Activated T-helper 1 cell treated with anti-CD3 and anti-CD28 coated beads, Interleukin-12 subunit alpha, Interleukin-12 subunit beta, Interleukin-2, Interleukin-4 antibody, amounts not matched to agents 30 ng/mL and 10 ng/mL and 1 ng/mL, durations not matched to agents 14 hours and 24 hours and 36 hours (primary cell): ENCODE measurements at regions of chr19 and their contacts with region 1.

Region 1: DNA sequence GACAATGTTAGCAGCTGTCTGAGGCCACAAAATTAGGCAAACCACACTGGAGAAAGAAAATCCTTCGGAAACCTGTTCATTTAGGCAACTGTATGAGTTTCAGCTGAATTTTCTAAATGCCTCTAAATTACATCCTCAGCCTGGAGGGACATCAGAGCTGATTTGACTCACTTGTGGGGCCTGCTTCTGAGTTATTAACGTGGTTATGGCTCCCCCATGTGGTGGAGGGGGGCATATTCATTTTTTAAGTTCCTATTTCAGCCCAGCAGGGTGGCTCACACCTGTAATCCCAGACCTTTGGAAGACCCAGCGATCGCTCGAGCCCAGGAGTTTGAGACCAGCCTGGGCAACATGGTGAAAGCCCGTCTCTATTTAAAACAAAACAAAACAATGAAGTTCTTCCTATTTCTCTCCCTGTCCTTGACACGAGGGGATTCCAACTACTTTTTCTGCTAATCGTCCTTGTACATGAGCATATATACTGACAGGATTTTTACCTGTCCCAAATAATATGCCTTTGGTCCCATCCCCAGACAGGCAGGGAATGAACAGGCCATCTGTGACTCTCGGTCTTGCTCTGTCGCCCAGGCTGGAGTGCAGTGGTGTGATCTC is 31.5 kb upstream of the HIF3A start:
- DNase-seq: peak; percentile 61
- H3K4me3 Mint-ChIP-seq: no peak overlapping the region
- H3K27ac Mint-ChIP-seq: no peak overlapping the region
- H3K4me1 Mint-ChIP-seq: peaks cover 10% of the 10 kb centered on the region
- H3K27me3 Mint-ChIP-seq: peaks cover 58% of the 10 kb centered on the region

Region 2: GRCh38 chr19:46030812-46031550 is 234.3 kb before region 1 on chr19:
- intact Hi-C with region 1: loop called (anchors 1 kb)
- DNase-seq: no peak
- H3K4me3 Mint-ChIP-seq: no peak overlapping the region
- H3K27ac Mint-ChIP-seq: no peak overlapping the region
- H3K4me1 Mint-ChIP-seq: peaks cover 14% of the 10 kb centered on the region
- H3K27me3 Mint-ChIP-seq: peaks cover 24% of the 10 kb centered on the region

Region 3: GRCh38 chr19:46115396-46116106 is 149.8 kb before region 1 on chr19:
- intact Hi-C with region 1: loop called (anchors 1 kb)
- DNase-seq: no peak
- H3K4me3 Mint-ChIP-seq: peak overlapping the region; percentile 12
- H3K27ac Mint-ChIP-seq: no peak overlapping the region
- H3K4me1 Mint-ChIP-seq: peaks cover 13% of the 10 kb centered on the region
- H3K27me3 Mint-ChIP-seq: peaks cover 22% of the 10 kb centered on the region

Region 4: DNA sequence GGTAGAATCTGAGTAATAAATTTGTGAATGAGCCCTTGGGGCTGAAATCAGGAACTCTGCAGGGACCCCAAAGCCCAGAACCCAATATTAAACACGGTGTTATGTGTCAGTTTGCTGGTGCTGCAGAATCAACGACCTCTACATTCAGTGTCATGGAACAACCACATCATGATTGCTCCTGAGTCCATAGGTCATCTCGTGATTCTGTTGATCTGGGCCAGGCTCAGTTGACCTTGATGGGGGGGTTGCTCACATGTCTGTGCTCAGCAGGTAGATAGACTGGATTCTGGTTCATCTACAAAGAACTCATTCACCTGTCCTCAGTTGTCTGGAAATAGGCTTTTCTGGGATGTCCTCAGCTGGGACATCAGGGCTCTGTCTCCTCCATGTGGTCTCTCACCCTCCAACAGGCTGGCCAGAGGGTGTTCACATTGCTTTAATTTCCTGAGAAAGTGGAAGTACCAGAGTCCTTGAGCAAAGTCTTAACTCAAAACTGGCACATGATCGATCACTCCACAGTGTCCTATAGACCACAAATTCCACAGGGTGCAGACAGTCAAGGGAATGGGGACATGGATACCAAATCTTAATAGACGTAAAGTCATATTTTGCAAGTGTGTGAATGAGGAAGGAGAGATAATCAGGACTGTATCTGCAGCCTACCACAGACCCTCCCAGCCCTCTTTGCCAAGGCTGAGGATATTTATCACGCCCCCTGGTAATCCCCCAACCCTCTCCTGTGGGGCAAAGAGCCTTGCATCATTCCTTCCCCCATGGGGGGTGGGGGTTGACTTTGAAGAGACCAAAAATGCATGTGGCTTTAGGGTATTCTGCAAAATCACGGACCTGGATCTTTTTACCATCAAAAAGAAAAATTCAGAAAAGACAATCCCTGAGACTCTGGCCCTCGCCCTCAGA is 75.1 kb before region 1 on chr19:
- intact Hi-C with region 1: loop called (anchors 1 kb)
- DNase-seq: no peak
- H3K4me3 Mint-ChIP-seq: no peak overlapping the region
- H3K27ac Mint-ChIP-seq: no peak overlapping the region
- H3K4me1 Mint-ChIP-seq: peaks cover 5% of the 10 kb centered on the region
- H3K27me3 Mint-ChIP-seq: peaks cover 27% of the 10 kb centered on the region

Region 5: GRCh38 chr19:46218160-46218559 is 47.2 kb before region 1 on chr19:
- intact Hi-C with region 1: no loop called
- DNase-seq: no peak
- H3K4me3 Mint-ChIP-seq: no peak overlapping the region
- H3K27ac Mint-ChIP-seq: no peak overlapping the region
- H3K4me1 Mint-ChIP-seq: no peaks in the 10 kb centered on the region
- H3K27me3 Mint-ChIP-seq: no peaks in the 10 kb centered on the region

Region 6: DNA sequence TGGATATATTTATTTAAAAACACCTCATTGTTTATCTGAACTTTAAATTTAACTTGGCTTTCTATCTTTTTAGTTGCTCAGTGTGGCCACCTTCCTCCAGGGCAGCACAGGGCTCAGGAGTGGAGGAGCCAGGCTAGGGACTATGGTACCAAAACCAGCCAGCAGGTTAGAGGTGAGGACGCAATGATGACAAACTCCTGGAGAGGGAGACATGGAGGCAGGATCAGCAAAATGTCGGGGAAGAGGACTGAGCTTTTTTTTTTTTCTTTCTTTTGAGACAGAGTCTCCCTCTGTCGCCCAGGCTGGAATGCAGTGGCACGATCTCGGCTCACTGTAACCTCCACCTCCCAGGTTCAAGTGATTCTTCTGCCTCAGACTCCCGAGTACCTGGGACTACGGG is 306.2 kb after region 1 on chr19:
- intact Hi-C with region 1: no loop called
- DNase-seq: peak; percentile 2
- H3K4me3 Mint-ChIP-seq: no peak overlapping the region
- H3K27ac Mint-ChIP-seq: no peak overlapping the region
- H3K4me1 Mint-ChIP-seq: peaks cover 9% of the 10 kb centered on the region
- H3K27me3 Mint-ChIP-seq: peaks cover 15% of the 10 kb centered on the region